ENCODE measurements at regions of chr16 and their contacts with region 1.

Region 1: DNA sequence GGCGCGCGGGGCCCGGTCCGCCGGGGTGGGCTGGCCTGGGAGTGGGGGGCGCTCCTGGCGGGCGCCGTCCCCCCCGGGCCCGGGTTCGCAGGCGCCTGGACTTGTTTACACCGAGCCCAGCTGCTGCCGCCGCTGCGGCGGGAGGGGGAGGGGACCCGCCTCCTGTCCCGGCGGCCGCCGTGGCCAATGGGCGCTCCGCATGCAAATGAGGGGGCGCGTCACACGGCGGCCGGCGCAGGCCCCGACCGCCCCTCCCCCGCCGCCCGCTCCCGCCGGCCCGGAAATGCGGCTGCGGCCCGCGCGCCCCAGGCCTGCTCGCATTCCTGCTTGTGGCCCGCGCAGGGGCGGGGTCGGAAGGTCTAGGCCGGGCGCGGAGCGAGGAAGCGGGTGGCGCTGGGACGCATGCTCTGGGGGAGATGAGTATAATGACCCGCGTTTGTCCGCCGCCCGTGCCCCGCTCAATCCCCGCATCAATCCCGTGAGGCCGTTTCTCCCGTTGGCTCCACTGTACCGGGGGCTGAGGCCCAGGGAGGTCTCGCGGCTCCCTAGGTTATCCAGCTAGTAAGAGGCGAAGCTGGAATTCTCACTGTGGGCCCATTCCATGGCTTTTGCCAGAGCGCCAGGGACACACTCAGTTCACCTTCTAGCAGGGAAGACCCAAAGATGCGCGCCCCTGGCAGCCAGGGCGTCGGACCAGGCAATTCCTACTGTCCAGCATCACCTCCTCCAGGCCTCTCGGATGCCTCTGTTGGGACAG is at the start of gene YPEL3:
- DNase-seq: peak; percentile 94 to 96
- H3K4me3 ChIP-seq: peak within 1 kb of the TSS; percentile 8 to 78 (median 48)
- H3K27ac ChIP-seq: peak within 1 kb of the TSS; percentile 82 to 92 (median 88)
- H3K4me1 ChIP-seq: peaks cover 34 to 39% of the 10 kb centered on the region in 2 donors
- H3K27me3 ChIP-seq: no peaks in the 10 kb centered on the region
- CTCF ChIP-seq: no peak
- POLR2A ChIP-seq: peak in 1 of 2 donors; percentile 89
- total RNA-seq, gene YPEL3: 32.4 to 372 (median 68.0) TPM

Region 2: DNA sequence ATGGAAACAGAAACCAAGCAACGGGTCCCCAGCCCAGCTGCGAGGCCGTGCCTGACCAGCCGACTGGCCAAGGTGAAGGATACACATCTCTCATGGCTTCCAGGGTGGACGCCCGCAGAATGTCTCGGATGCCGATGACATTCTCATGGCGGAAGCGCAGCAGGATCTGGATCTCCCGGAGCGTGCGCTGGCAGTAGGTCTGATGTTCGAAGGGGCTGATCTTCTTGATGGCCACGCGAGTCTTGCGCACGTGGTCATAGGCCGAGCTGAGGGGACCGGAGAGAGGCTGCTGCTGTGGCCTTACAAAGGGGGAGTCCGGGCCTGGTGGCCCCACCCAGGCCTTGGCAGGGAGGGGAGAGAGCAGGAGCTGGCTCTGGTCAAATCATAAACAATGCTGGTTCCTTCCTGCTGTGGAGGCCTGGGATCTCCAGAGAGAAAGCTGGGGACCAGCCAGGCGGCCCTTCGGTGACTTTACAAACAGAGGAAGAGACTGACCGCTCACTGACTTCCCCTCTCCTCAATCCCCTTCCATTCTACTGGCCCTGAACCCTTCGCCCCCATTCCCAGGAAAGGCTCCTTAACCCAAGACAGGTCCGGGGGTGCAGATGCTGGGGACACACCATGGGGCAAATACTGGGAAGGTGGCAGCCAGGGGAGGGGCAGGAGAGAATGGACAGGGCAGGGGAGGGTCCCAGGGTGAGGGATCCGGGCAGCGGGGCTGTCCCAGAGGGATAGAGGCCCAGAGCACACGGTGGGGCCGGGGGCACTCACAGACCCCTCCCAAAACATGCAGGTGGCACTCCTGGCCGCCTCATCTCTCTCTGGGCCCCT is 25.7 kb after region 1 on chr16:
- intact Hi-C with region 1: loop called (anchors 2 kb)
- DNase-seq: peak; percentile 52 to 55
- H3K4me3 ChIP-seq: peak overlapping the region; percentile 31 to 84 (median 72)
- H3K27ac ChIP-seq: peak overlapping the region; percentile 30 to 95 (median 91)
- H3K4me1 ChIP-seq: peaks cover 16 to 28% of the 10 kb centered on the region in 2 donors
- H3K27me3 ChIP-seq: no peaks in the 10 kb centered on the region
- CTCF ChIP-seq: no peak
- POLR2A ChIP-seq: peak in 1 of 2 donors; percentile 18

Region 3: GRCh38 chr16:30378236-30379204 is 282.2 kb after region 1 on chr16:
- intact Hi-C with region 1: no loop called
- DNase-seq: peak; percentile 99 to 100
- H3K4me3 ChIP-seq: peak overlapping the region; percentile 56 to 86 (median 69)
- H3K27ac ChIP-seq: peak overlapping the region; percentile 99 to 100 (median 100)
- H3K4me1 ChIP-seq: peaks cover 12 to 15% of the 10 kb centered on the region in 2 donors
- H3K27me3 ChIP-seq: no peaks in the 10 kb centered on the region
- CTCF ChIP-seq: peak in 3 of 6 experiments; percentile 6 to 15 (median 9)
- POLR2A ChIP-seq: peak; percentile 53 to 84